Heart right ventricle (tissue), 16 donors: ENCODE measurements at regions of chr18 and their contacts with region 1.

Region 1: GRCh38 chr18:76364282-76365259 is 130.5 kb downstream of the ZNF516 start:
- DNase-seq: no peak
- ATAC-seq: no peak
- H3K4me3 ChIP-seq: no peak overlapping the region
- H3K27ac ChIP-seq: no peak overlapping the region
- H3K4me1 ChIP-seq: no peaks in the 10 kb centered on the region
- H3K27me3 ChIP-seq: no peaks in the 10 kb centered on the region
- CTCF ChIP-seq: no peak

Region 2: DNA sequence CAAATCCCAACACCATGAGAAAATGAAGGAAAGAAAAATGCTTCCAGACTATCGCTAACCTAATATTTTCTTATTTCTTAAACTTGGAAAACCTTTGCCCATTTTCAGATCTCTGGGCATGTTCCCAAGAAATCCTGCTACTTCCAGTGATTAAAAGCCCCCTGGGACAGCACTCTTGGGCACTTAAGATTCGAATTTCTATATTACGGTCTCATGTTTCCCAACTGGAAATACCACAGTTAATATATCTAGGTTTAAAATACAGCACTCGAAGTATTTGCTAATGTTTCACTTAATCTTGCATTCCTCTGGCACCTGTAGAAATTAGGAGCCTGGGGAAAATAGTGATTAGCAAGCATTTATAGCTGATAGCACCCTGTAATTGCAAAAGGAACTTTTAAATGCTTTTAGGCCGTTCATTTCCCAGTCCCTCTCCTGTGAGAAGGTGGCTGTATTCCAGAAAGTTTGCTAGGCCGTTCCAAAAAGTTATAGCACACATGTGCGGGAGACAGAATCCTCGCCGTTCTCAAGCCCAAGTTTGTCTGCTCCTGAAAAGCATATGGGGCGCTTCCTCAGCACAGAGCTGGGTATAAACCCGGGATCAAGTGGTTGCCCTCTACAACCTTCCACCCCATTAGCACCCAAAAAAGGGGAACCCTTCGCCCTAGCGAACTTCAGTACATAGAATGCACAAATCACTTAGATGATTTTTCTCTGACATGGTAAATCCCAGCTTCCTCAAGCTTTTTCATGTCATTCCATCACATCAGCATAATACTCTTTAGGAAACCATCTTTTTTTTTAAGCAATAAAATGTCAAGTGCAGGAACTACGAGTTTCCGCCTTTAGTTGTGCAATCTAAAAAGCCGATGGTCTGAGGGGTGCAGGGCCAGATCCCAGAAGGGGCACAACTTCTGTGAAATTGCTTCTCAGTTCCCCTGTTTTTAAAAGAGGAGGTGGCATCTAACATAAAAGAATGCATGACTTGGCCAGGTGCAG is 1968.1 kb before region 1 on chr18:
- intact Hi-C with region 1: loop called in 1 of 10 experiments (anchors 10 kb)
- DNase-seq: no peak
- ATAC-seq: peak in 5 of 8 donors; percentile 16 to 57 (median 36)
- H3K4me3 ChIP-seq: no peak overlapping the region
- H3K27ac ChIP-seq: peak overlapping the region in 4 of 10 donors; percentile 5 to 65 (median 44)
- H3K4me1 ChIP-seq: peaks cover 0 to 47% (median 23%) of the 10 kb centered on the region in 9 donors
- H3K27me3 ChIP-seq: no peaks in the 10 kb centered on the region
- CTCF ChIP-seq: no peak